ENCODE measurements at regions of chr11 and their contacts with region 1.

Region 1: DNA sequence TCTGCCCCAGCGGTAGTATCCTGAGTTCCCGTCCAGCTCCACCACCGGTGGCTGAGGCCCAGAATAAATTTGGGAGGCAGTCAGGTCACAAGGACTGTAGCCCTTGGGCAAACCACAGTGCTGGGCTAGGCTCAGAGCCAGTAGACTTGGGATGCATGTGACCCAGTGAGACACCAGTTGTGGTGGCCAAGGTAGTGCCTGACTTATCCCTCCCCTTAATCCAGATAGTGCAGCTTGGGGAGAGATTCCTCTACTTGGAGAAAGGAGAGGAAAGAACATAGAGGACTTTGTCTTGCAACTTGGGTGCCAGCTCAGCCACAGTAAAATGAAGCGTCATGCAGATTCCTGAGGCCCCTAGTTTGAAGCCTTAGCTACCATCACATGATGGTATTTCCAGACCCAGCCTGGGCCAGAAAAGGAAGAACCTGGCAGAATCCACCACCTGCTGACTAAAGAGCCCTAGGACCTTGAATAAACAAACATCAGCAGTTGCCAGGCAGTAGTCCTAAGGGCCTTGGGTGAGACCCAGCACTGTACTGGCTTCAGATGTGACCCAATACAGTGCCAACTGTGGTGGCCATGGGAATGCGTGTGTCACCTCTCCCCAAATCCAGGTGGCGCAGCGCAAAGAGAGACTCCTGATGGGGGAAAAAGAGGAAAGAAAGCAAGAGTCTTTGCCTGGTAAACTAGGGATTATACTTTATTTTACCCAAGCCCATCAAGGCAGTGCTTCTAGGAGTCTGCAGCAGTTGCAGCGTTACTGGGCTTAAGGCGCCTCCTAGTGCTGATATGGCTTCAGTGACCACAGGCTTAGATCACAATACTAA is 17.0 kb upstream of the DDX10 start:
- DNase-seq: peak; percentile 77
- ATAC-seq: peak; percentile 96
- H3K4me3 Mint-ChIP-seq: no peak overlapping the region
- H3K27ac Mint-ChIP-seq: no peak overlapping the region
- H3K4me1 Mint-ChIP-seq: peaks cover 3% of the 10 kb centered on the region
- H3K27me3 Mint-ChIP-seq: peaks cover 2% of the 10 kb centered on the region

Region 2: GRCh38 chr11:108117746-108118371 is 530.1 kb before region 1 on chr11:
- CTCF ChIA-PET with region 1: interaction called, 45 read pairs
- DNase-seq: no peak
- ATAC-seq: no peak
- H3K4me3 Mint-ChIP-seq: no peak overlapping the region
- H3K27ac Mint-ChIP-seq: no peak overlapping the region
- H3K4me1 Mint-ChIP-seq: peaks cover 18% of the 10 kb centered on the region
- H3K27me3 Mint-ChIP-seq: no peaks in the 10 kb centered on the region

Region 3: DNA sequence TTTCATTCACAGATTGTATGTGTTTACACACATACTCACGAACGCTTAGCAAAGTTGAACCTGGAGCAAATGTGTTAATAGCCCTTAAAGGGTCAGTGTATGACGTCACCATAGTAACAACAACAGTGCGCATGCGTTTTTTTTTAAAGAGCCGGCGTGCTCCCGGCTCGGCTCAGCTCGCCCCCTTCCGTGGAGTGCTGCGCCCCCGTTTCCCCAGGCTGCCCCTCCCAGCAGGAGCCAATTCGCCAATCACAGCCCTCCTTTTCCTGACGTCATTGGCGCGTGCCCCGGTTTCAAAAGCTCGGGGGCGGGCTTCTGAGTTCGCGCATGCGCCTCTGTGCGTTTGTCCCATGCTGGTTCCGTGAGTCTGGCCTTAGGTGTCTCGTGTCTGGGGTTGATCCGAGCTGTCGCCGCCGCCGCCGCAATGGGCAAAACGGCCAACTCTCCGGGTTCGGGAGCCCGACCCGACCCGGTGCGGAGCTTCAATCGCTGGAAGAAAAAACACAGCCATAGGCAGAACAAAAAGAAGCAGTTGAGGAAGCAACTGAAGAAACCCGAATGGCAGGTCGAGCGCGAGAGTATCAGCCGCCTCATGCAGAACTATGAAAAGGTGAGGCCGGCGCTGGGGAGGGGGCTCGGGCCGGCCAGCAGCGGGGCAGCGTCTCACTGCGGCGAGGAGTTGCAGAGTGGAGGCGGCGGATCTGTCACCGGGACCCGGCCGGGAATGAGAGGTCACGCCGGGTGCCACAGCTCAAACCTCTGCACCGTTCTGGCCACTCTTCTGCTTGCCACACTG is 17.0 kb after region 1 on chr11 and contains the start of gene DDX10:
- CTCF ChIA-PET with region 1: interaction called, 10 read pairs
- DNase-seq: peak; percentile 99
- ATAC-seq: peak; percentile 99
- H3K4me3 Mint-ChIP-seq: peak within 1 kb of the TSS; percentile 100
- H3K27ac Mint-ChIP-seq: peak within 1 kb of the TSS; percentile 89
- H3K4me1 Mint-ChIP-seq: peaks cover 39% of the 10 kb centered on the region
- H3K27me3 Mint-ChIP-seq: no peaks in the 10 kb centered on the region
- total RNA-seq, gene DDX10: 32.5 to 42.6 TPM

Region 4: GRCh38 chr11:108697872-108698473 is 50.1 kb after region 1 on chr11:
- CTCF ChIA-PET with region 1: no interaction called
- DNase-seq: peak; percentile 61
- ATAC-seq: peak; percentile 71
- H3K4me3 Mint-ChIP-seq: no peak overlapping the region
- H3K27ac Mint-ChIP-seq: no peak overlapping the region
- H3K4me1 Mint-ChIP-seq: peaks cover 6% of the 10 kb centered on the region
- H3K27me3 Mint-ChIP-seq: no peaks in the 10 kb centered on the region

Region 5: GRCh38 chr11:108713076-108713790 is 65.3 kb after region 1 on chr11:
- CTCF ChIA-PET with region 1: no interaction called
- DNase-seq: no peak
- ATAC-seq: peak; percentile 47
- H3K4me3 Mint-ChIP-seq: no peak overlapping the region
- H3K27ac Mint-ChIP-seq: no peak overlapping the region
- H3K4me1 Mint-ChIP-seq: peaks cover 25% of the 10 kb centered on the region
- H3K27me3 Mint-ChIP-seq: no peaks in the 10 kb centered on the region

Measured in activated CD8-positive, alpha-beta memory T cell treated with anti-CD3 and anti-CD28 coated beads, Interleukin-2, amount 10 ng/mL, durations not matched to agents 7 days and 5 days (primary cell).